ENCODE measurements at regions of chr12 and their contacts with region 1.

Region 1: DNA sequence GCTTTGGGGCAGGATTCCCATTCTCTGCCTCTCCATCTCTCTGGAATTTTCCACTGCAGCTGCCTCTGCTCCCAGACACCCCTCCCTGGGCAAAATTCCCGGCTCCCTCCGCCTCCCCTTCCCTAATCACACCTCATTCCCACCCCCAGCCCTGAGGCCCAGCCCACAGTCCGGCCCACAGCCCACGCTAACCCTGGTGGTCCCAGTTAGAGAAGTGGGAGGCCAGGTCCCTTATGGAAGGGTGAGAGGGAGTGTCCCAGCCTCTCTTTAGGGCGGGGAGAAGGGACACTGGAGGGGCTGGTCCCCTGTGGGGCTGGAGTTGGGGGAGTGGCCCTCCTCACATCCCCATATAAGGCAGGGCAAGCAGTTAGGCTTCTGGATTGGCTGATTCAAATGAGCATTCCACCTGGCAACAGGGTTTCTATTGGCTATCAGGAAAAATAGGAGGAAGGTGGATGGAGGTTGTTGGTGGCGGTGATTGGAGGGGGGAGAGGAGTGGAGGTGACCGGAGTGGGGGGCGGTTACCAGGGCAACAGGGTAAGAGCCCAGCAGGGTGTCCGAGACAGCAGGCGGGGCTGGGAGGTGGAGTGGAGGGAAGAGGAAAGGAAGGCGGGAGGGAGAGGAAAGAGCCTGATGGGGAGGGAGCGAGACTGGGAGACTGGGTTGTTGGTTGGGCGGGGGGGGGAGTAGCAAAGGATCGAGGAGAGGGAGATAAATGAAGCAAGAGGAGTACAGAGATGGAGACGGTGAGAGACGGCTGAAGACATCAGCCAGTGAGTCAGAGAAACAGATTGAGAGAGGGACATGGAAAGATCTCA is 1.9 kb upstream of the PTMS start:
- DNase-seq: peak; percentile 50 to 72 (median 54)
- H3K4me3 ChIP-seq: no peak overlapping the region
- H3K4me3 Mint-ChIP-seq: peak overlapping the region; percentile 27 to 97 (median 63)
- H3K27ac ChIP-seq: peak overlapping the region; percentile 33
- H3K27ac Mint-ChIP-seq: peak overlapping the region in 4 of 8 donors; percentile 14 to 78 (median 54)
- H3K4me1 ChIP-seq: peaks cover 30% of the 10 kb centered on the region
- H3K4me1 Mint-ChIP-seq: peaks cover 32 to 45% (median 40%) of the 10 kb centered on the region in 3 donors
- H3K27me3 ChIP-seq: no peaks in the 10 kb centered on the region
- H3K27me3 Mint-ChIP-seq: peaks cover 21 to 27% of the 10 kb centered on the region in 2 donors

Region 2: DNA sequence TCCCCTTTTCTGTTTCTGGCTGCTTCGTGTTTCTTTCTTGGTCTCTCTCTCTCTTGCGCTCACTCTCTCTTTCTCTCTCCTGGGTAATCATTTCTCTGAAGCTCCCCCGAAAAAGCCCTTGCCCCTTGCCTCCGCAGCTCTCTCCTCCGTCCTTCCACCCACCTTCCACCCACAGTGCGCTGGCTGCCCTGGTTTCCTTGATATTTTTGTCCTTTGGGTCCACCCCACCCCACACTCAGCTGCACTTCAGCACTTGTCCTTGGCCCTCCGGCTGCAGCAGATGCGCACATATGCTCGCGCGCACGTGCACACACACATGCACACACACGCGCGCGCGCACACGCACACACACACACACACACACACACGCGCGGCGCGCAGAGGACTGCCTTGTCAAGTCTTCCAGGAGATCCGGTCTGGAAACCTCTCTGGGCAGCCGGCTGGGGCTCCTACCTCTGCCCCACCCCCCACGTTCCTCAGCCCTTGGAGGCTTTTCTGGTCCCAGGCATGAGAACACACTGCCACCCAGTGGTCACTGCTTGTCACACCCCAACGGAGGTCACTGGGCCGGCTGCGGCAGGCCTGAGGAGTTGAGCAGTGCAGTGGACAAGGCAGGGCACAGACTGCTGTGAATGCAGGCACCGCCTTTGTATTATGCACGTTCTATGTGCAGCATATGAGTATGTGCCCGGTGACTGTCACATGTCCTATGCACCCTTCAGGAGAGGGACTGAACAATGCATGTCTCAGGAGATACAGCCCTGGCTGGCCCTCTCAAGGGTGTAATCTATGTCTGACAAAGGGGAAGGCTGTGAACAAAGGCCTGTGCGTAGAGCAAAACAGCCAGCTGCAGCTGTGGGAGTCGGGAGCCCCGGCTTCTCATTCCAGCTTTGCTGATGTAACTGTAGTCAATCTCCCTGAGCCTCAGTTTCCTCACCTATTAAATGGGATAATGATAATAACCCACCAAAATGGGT is 14.6 kb after region 1 on chr12:
- CTCF ChIA-PET with region 1: interaction called, 42 read pairs
- POLR2A ChIA-PET with region 1: interaction called, 5 read pairs
- DNase-seq: peak; percentile 81 to 92 (median 85)
- H3K4me3 ChIP-seq: peak overlapping the region; percentile 63
- H3K4me3 Mint-ChIP-seq: peak overlapping the region; percentile 74 to 93 (median 77)
- H3K27ac ChIP-seq: no peak overlapping the region
- H3K27ac Mint-ChIP-seq: peak overlapping the region; percentile 54 to 95 (median 86)
- H3K4me1 ChIP-seq: peaks cover 60% of the 10 kb centered on the region
- H3K4me1 Mint-ChIP-seq: peaks cover 35 to 44% (median 40%) of the 10 kb centered on the region in 3 donors
- H3K27me3 ChIP-seq: no peaks in the 10 kb centered on the region
- H3K27me3 Mint-ChIP-seq: peaks cover 0 to 7% of the 10 kb centered on the region in 2 donors

Region 3: GRCh38 chr12:6786416-6787094 is 22.3 kb after region 1 on chr12:
- CTCF ChIA-PET with region 1: interaction called, 10 read pairs
- POLR2A ChIA-PET with region 1: no interaction called
- DNase-seq: peak in 2 of 5 donors; percentile 8 to 51
- H3K4me3 ChIP-seq: peak overlapping the region; percentile 12
- H3K4me3 Mint-ChIP-seq: peak overlapping the region in 1 of 7 donors; percentile 2
- H3K27ac ChIP-seq: no peak overlapping the region
- H3K27ac Mint-ChIP-seq: peak overlapping the region in 6 of 8 donors; percentile 12 to 81 (median 42)
- H3K4me1 ChIP-seq: peaks cover 70% of the 10 kb centered on the region
- H3K4me1 Mint-ChIP-seq: peaks cover 6 to 11% (median 10%) of the 10 kb centered on the region in 3 donors
- H3K27me3 ChIP-seq: no peaks in the 10 kb centered on the region
- H3K27me3 Mint-ChIP-seq: no peaks in the 10 kb centered on the region

Measured in CD8-positive, alpha-beta memory T cell (primary cell).